GM10248 (cell line): ENCODE measurements at regions of chr18 and their contacts with region 1.

Region 1: GRCh38 chr18:63329431-63330145 is 10.0 kb upstream of the BCL2 start:
- DNase-seq: no peak
- CTCF ChIP-seq: no peak

Region 2: DNA sequence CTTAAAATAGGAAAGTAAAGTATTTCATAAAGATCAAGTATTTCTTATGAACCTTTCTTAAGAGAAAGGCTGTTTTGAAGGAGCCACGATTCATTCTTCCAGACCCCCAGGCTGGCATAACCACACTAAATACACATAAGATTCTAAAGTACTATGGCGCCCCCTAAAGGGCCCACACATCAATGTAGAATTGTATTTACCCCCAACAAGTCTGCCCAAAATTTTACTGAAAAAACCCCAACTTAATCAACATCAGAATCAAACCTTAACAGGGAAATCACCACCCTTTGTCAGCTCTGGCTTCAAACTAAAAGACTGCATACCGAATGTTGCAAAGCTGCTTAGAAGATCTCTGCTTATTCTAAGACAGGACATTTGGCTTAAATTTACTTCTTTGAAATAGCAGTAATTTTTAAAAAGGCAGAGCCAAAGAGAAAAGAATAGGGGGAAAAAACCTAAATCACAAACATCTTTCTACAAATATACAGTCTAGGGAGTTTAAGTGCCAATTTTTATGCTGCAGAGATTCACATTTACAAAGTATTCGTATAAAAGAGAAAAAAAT is 10.4 kb after region 1 on chr18:
- CTCF ChIA-PET with region 1: interaction called, 20 read pairs
- POLR2A ChIA-PET with region 1: interaction called, 3 read pairs
- DNase-seq: no peak
- CTCF ChIP-seq: peak; percentile 28